ENCODE measurements at regions of chr16 and their contacts with region 1.

Region 1: GRCh38 chr16:12573730-12574383 is 229.8 kb downstream of the CPPED1 start:
- DNase-seq: peak; percentile 88
- ATAC-seq: peak; percentile 80
- H3K4me3 Mint-ChIP-seq: no peak overlapping the region
- H3K27ac Mint-ChIP-seq: no peak overlapping the region
- H3K4me1 Mint-ChIP-seq: peaks cover 9% of the 10 kb centered on the region
- H3K27me3 Mint-ChIP-seq: peaks cover 4% of the 10 kb centered on the region
- CTCF ChIP-seq: peak; percentile 85

Region 2: GRCh38 chr16:12535535-12536411 is 38.1 kb before region 1 on chr16:
- CTCF ChIA-PET with region 1: interaction called, 13 read pairs
- POLR2A ChIA-PET with region 1: interaction called, 3 read pairs
- intact Hi-C with region 1: no loop called
- DNase-seq: peak; percentile 59
- ATAC-seq: peak; percentile 69
- H3K4me3 Mint-ChIP-seq: peak overlapping the region; percentile 11
- H3K27ac Mint-ChIP-seq: peak overlapping the region; percentile 89
- H3K4me1 Mint-ChIP-seq: peaks cover 79% of the 10 kb centered on the region
- H3K27me3 Mint-ChIP-seq: no peaks in the 10 kb centered on the region
- CTCF ChIP-seq: no peak

Region 3: GRCh38 chr16:12542818-12543699 is 30.8 kb before region 1 on chr16:
- CTCF ChIA-PET with region 1: interaction called, 12 read pairs
- POLR2A ChIA-PET with region 1: no interaction called
- intact Hi-C with region 1: no loop called
- DNase-seq: peak; percentile 25
- ATAC-seq: no peak
- H3K4me3 Mint-ChIP-seq: no peak overlapping the region
- H3K27ac Mint-ChIP-seq: no peak overlapping the region
- H3K4me1 Mint-ChIP-seq: peaks cover 36% of the 10 kb centered on the region
- H3K27me3 Mint-ChIP-seq: no peaks in the 10 kb centered on the region
- CTCF ChIP-seq: no peak

Region 4: DNA sequence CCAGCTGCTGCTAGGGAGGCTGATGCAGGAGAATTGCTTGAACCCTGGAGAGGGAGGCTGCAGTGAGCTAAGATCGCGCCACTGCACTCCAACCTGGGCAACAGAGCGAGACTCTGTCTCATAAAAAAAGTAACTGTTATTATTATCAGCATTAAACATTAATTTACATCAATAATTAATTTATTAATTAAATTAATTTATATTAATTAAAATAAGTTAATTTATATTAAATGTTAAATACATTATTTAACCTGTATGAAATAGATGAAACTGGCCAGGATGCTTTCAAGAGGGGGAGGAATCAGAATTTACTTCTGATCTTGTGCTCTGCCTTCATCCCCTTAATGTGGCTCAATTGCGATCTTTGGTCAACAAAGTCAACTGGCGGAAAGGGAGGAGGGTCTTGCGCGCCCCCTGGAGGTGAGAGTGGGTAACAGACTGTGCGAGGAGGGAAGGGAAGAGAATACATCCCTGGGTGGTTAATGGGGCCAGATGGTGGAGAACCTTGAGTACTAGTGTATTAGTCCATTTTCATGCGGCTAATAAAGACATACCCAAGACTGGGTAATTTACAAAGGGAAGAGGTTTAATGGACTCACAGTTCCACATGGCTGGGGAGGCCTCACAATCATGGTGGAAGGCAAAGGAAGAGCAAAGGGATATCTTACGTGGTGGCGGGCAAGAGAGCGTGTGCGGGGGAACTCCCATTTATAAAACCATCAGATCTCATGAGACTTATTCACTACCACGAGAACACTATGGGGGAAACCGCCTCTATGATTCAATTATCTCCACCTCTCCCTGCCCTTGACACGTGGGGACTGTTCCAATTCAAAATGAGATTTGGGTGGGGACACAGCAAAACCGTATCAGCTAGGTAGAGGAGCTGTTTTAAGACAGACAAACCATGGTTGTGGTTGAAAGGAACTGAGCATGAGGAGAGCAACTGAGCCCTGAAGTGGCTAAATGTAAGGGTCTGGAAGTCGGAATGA is 245.6 kb after region 1 on chr16:
- CTCF ChIA-PET with region 1: interaction called, 28 read pairs
- POLR2A ChIA-PET with region 1: no interaction called
- intact Hi-C with region 1: loop called (anchors 5 kb)
- DNase-seq: peak; percentile 83
- ATAC-seq: peak; percentile 89
- H3K4me3 Mint-ChIP-seq: no peak overlapping the region
- H3K27ac Mint-ChIP-seq: no peak overlapping the region
- H3K4me1 Mint-ChIP-seq: peaks cover 10% of the 10 kb centered on the region
- H3K27me3 Mint-ChIP-seq: peaks cover 3% of the 10 kb centered on the region
- CTCF ChIP-seq: peak; percentile 88

Region 5: GRCh38 chr16:13083681-13084080 is 509.8 kb after region 1 on chr16:
- CTCF ChIA-PET with region 1: no interaction called
- POLR2A ChIA-PET with region 1: no interaction called
- intact Hi-C with region 1: no loop called
- DNase-seq: no peak
- ATAC-seq: no peak
- H3K4me3 Mint-ChIP-seq: no peak overlapping the region
- H3K27ac Mint-ChIP-seq: no peak overlapping the region
- H3K4me1 Mint-ChIP-seq: no peaks in the 10 kb centered on the region
- H3K27me3 Mint-ChIP-seq: no peaks in the 10 kb centered on the region
- CTCF ChIP-seq: no peak